Caco-2 (cell line): ENCODE measurements at regions of chr16 and their contacts with region 1.

Region 1: GRCh38 chr16:71883849-71884638 is at the start of gene ZNF821:
- DNase-seq: peak; percentile 84 to 94
- H3K4me3 ChIP-seq: peak within 1 kb of the TSS; percentile 69
- H3K4me3 Mint-ChIP-seq: peak within 1 kb of the TSS; percentile 97
- H3K27ac Mint-ChIP-seq: peak within 1 kb of the TSS; percentile 91
- H3K4me1 ChIP-seq: peaks cover 5% of the 10 kb centered on the region; the same call in 1 of the 2 replicates
- H3K4me1 Mint-ChIP-seq: peaks cover 20% of the 10 kb centered on the region
- H3K27me3 ChIP-seq: no peaks in the 10 kb centered on the region
- H3K27me3 Mint-ChIP-seq: no peaks in the 10 kb centered on the region
- CTCF ChIP-seq: peak; percentile 60 to 61
- total RNA-seq, gene ZNF821: 16.3 and 16.9 TPM in 2 replicates

Region 2: DNA sequence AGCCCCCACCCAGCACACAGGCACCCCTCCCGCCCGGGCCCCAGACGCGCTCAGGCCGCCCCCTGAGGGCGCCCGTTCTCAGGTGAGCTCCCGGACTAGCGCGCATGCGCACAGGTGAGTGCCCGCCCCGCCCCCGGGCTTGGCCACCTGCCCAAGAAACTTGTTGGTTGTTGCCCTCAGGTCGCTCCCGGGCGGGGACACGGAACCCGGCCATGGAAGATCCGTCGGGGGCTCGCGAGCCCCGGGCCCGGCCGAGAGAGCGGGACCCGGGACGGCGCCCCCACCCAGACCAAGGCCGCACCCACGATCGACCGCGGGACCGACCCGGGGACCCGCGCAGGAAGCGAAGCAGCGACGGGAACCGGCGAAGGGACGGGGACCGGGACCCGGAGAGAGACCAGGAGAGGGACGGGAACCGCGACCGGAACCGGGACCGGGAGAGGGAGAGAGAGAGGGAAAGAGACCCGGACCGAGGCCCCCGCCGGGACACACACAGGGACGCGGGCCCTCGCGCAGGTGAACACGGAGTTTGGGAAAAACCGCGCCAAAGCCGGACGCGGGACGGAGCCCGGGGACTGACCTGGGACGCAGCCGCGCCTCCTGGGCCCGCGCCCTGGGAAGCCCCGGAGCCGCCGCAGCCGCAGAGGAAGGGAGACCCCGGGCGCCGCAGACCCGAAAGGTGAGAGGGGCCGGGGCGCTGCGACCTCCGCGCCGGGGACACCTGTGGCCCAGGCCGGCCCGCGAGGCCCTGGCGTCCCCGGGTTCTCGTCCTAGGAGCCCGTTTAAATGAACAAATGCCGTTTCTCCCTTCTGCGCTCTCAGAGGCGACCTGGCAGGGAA is 257.8 kb before region 1 on chr16 and contains the start of gene MARVELD3:
- CTCF ChIA-PET with region 1: interaction called, 10 read pairs
- POLR2A ChIA-PET with region 1: no interaction called
- intact Hi-C with region 1: no loop called
- DNase-seq: peak; percentile 96 to 99
- H3K4me3 ChIP-seq: peak within 1 kb of the TSS; percentile 85
- H3K4me3 Mint-ChIP-seq: no peak within 1 kb of the TSS
- H3K27ac Mint-ChIP-seq: peak within 1 kb of the TSS; percentile 75
- H3K4me1 ChIP-seq: peaks cover 12% of the 10 kb centered on the region
- H3K4me1 Mint-ChIP-seq: peaks cover 9% of the 10 kb centered on the region
- H3K27me3 ChIP-seq: no peaks in the 10 kb centered on the region
- H3K27me3 Mint-ChIP-seq: no peaks in the 10 kb centered on the region
- CTCF ChIP-seq: peak; percentile 41 to 75
- total RNA-seq, gene MARVELD3: 50.6 and 51.7 TPM in 2 replicates

Region 3: DNA sequence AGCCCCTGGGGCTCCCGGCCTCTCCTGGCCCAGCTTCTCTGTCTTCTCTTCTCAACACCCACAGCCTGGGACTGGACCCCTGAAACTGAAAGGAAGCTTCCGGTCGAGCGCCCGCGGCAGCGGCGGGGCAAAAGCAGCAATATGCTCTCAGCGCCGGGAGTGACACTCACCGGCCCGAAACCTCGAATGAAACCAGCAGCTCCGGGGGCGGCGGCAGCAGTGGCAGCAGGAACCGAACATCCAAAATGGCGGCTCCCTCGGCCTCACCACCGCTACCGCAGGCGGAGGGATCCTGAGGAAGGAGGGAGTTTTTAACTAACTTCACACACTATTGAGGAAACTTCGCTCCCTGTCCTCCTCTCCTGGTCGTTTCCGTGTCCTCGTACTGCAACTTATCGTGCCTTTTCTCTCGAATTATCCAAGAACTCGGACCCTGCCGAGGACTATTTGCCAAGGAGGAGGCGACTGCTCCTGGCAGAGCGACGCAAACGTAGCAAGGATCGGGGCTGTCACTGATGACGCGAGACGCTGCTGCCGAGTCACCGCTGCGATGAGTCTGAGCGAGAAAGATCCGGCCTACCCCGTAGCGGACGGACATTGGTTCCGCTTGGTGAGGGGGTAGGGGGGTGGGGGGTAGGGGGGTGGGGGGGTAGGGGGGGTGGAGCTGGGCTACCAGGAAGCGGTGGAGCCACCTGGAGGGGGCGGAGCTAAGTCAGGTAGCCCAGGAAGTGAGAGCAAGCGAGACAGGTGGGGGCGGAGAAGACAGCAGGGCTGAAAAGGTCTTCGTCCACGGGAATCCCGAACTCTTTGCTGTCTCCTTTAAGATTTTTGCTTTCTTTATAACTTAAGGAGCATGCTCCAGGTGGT is 75.2 kb before region 1 on chr16 and contains the start of gene AP1G1:
- CTCF ChIA-PET with region 1: interaction called, 7 read pairs
- POLR2A ChIA-PET with region 1: interaction called, 3 read pairs
- intact Hi-C with region 1: loop called (anchors 2 kb)
- DNase-seq: peak; percentile 97 to 99
- H3K4me3 ChIP-seq: peak within 1 kb of the TSS; percentile 83
- H3K4me3 Mint-ChIP-seq: peak within 1 kb of the TSS; percentile 93
- H3K27ac Mint-ChIP-seq: peak within 1 kb of the TSS; percentile 97
- H3K4me1 ChIP-seq: 0 out of 2 replicates have a peak, but pooled peaks cover 16% of the 10 kb centered on the region
- H3K4me1 Mint-ChIP-seq: no peaks in the 10 kb centered on the region
- H3K27me3 ChIP-seq: no peaks in the 10 kb centered on the region
- H3K27me3 Mint-ChIP-seq: no peaks in the 10 kb centered on the region
- CTCF ChIP-seq: no peak
- total RNA-seq, gene AP1G1: 135 and 139 TPM in 2 replicates

Region 4: DNA sequence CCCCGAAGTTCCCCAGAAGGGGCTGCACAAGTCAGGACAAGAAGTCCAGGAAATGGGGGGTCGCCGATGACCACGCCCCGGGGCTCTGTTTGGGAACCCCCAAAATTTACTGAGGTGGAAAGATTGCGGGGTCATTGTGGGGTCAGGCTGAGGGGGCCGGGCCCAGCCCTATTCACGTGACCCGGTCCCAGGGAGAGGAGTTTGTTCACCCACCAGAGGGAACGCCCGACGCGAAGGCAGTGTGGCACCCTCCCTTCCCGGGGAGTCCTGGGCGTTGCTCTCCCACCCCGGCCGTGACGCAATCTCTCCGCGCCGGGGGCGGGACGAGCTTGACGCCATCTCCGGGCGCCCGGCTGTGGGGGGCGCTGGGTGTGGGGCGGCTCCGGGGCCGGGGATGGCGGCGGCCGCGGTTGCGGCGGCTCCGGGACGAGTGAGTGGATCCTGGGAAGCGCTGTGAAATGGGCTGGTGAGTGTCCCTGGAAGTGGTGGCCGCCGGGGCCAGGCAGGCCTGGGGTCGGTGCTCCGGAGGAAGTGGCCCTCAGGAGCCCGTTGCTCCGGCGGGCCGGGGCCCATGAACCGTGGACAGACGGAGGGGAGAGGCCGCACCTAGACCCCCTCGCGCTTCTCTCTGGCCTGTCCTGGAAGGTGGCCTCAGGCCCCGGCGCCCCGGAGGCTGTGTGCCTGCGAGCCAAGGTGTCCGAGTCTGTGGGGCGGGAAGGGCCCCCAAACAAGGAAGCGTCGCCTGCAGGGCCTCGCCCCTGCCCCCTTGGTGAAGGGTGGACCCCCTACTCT is 38.2 kb before region 1 on chr16 and contains the start of gene ATXN1L:
- CTCF ChIA-PET with region 1: interaction called, 3 read pairs
- POLR2A ChIA-PET with region 1: interaction called, 3 read pairs
- intact Hi-C with region 1: loop called (anchors 2 kb)
- DNase-seq: peak; percentile 95 to 98
- H3K4me3 ChIP-seq: peak within 1 kb of the TSS; percentile 93
- H3K4me3 Mint-ChIP-seq: peak within 1 kb of the TSS; percentile 91
- H3K27ac Mint-ChIP-seq: peak within 1 kb of the TSS; percentile 95
- H3K4me1 ChIP-seq: peaks cover 8% of the 10 kb centered on the region; the same call in 1 of the 2 replicates
- H3K4me1 Mint-ChIP-seq: peaks cover 9% of the 10 kb centered on the region
- H3K27me3 ChIP-seq: no peaks in the 10 kb centered on the region
- H3K27me3 Mint-ChIP-seq: no peaks in the 10 kb centered on the region
- CTCF ChIP-seq: no peak
- total RNA-seq, gene ATXN1L: 40.6 and 44.8 TPM in 2 replicates

Region 5: GRCh38 chr16:71894921-71895678 is 11.1 kb after region 1 on chr16 and contains the start of gene IST1:
- CTCF ChIA-PET with region 1: interaction called, 16 read pairs
- POLR2A ChIA-PET with region 1: interaction called, 12 read pairs
- intact Hi-C with region 1: loop called (anchors 1 kb)
- DNase-seq: peak; percentile 99
- H3K4me3 ChIP-seq: peak within 1 kb of the TSS; percentile 79
- H3K4me3 Mint-ChIP-seq: peak within 1 kb of the TSS; percentile 79
- H3K27ac Mint-ChIP-seq: peak within 1 kb of the TSS; percentile 89
- H3K4me1 ChIP-seq: peaks cover 5% of the 10 kb centered on the region; the same call in 1 of the 2 replicates
- H3K4me1 Mint-ChIP-seq: no peaks in the 10 kb centered on the region
- H3K27me3 ChIP-seq: no peaks in the 10 kb centered on the region
- H3K27me3 Mint-ChIP-seq: no peaks in the 10 kb centered on the region
- CTCF ChIP-seq: no peak
- total RNA-seq, gene IST1: 310 and 331 TPM in 2 replicates

Region 6: GRCh38 chr16:71919035-71919434 is 35.0 kb after region 1 on chr16:
- CTCF ChIA-PET with region 1: no interaction called
- POLR2A ChIA-PET with region 1: no interaction called
- intact Hi-C with region 1: no loop called
- DNase-seq: no peak
- H3K4me3 ChIP-seq: no peak overlapping the region
- H3K4me3 Mint-ChIP-seq: no peak overlapping the region
- H3K27ac Mint-ChIP-seq: peak overlapping the region; percentile 55
- H3K4me1 ChIP-seq: no peaks in the 10 kb centered on the region
- H3K4me1 Mint-ChIP-seq: no peaks in the 10 kb centered on the region
- H3K27me3 ChIP-seq: no peaks in the 10 kb centered on the region
- H3K27me3 Mint-ChIP-seq: no peaks in the 10 kb centered on the region
- CTCF ChIP-seq: no peak

Region 7: GRCh38 chr16:71961066-71962039 is 77.3 kb after region 1 on chr16:
- CTCF ChIA-PET with region 1: interaction called, 26 read pairs
- POLR2A ChIA-PET with region 1: interaction called, 3 read pairs
- intact Hi-C with region 1: loop called (anchors 1 kb)
- DNase-seq: peak; percentile 85 to 87
- H3K4me3 ChIP-seq: no peak overlapping the region
- H3K4me3 Mint-ChIP-seq: no peak overlapping the region
- H3K27ac Mint-ChIP-seq: no peak overlapping the region
- H3K4me1 ChIP-seq: no peaks in the 10 kb centered on the region
- H3K4me1 Mint-ChIP-seq: peaks cover 9% of the 10 kb centered on the region
- H3K27me3 ChIP-seq: no peaks in the 10 kb centered on the region
- H3K27me3 Mint-ChIP-seq: peaks cover 6% of the 10 kb centered on the region
- CTCF ChIP-seq: peak; percentile 92 to 94

Region 8: DNA sequence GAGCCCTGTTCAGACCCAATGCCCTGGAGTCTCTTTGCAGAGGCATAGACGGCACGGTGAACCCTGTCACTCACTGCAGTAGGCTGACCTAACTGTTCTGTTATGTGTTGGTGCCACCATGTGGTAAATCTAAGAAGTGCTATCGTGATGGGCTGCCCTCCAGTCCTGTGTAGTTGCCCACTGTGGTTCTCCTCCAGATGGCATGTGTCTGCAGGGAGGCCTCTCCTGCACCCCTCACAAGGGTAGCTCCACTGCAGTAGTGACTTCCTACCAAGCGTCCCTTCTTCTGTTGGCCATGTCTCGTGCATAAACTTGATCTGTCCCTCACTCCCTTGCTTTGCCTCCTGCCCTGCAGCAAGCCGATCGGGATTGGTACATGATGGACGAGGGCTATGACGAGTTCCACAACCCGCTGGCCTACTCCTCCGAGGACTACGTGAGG is 215.4 kb after region 1 on chr16:
- CTCF ChIA-PET with region 1: no interaction called
- POLR2A ChIA-PET with region 1: interaction called, 3 read pairs
- intact Hi-C with region 1: loop called (anchors 5 kb)
- DNase-seq: peak; percentile 70 to 80
- H3K4me3 ChIP-seq: no peak overlapping the region
- H3K4me3 Mint-ChIP-seq: no peak overlapping the region
- H3K27ac Mint-ChIP-seq: no peak overlapping the region
- H3K4me1 ChIP-seq: 0 out of 2 replicates have a peak, but pooled peaks cover 6% of the 10 kb centered on the region
- H3K4me1 Mint-ChIP-seq: peaks cover 9% of the 10 kb centered on the region
- H3K27me3 ChIP-seq: no peaks in the 10 kb centered on the region
- H3K27me3 Mint-ChIP-seq: no peaks in the 10 kb centered on the region
- CTCF ChIP-seq: peak; percentile 60 to 80